Posterior cingulate gyrus (tissue), 11 donors: ENCODE measurements at regions of chr15 and their contacts with region 1.

Region 1: GRCh38 chr15:86915811-86916331 is 836.2 kb downstream of the AGBL1 start:
- DNase-seq: peak in 8 of 10 donors; percentile 13 to 86 (median 40)

Region 2: GRCh38 chr15:86526938-86527690 is 388.8 kb before region 1 on chr15:
- intact Hi-C with region 1: no loop called
- DNase-seq: no peak

Region 3: GRCh38 chr15:87604857-87605446 is 689.1 kb after region 1 on chr15:
- intact Hi-C with region 1: loop called (anchors 2 kb)
- DNase-seq: peak in 3 of 10 donors; percentile 4 to 34 (median 24)

Region 4: DNA sequence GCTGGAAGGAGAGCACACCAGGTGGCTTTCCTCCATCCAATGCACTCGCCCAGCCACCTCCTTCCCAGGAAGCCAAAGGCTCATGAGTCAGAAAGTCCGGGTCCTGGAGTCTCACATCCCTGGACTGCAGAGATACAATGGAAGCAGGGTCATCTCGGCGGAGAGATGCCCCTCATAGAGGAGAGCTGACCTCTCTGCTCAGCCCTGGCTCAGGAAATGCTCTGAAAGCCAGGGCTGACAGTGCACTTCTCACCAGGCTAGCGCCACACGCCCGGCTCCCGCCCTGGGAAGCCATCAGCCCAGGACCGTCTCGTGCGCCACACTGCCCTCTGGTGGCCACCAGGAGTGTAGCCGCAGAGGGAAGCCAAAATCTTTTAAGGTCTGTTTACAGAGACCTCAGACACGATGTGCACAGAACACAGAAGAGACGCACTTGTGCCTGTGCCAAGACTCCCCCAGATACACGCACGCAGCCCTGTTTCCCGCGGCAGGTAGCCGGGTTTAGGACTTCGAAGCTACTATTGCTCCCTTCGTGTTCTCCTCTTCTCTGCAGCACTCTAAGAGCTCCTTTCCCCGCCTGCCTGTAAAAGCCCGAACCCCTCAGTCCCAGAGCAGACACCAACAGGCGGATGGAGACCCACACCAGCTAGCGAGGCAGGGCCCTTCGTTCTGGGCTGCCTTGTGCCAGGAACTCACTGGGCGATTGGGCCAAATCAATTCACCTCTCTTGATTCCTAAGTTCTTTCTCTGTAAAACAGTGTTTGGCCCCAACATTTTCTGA is 1331.0 kb after region 1 on chr15:
- intact Hi-C with region 1: loop called (anchors 5 kb)
- DNase-seq: peak; percentile 61 to 97 (median 82)